B cell (primary cell): ENCODE measurements at regions of chr5 and their contacts with region 1.

Region 1: DNA sequence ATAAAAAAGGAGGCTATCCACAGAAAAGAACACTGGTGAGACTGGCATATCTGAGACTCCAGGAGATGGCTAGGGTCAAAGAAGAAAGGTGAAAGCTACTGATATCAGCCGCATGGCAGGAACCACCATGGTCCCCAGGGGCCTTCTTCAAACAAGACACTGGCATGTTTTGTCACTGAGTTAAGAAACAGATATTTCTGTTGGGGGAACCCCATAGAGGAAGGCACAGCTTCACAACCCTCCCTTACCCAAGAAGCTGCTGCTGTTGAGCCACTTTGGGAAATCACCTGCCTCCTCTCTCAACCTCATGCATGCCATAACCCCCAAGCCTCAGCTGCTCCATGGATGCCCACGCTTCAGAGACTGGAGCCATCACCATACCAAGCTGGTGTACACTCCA is 13.3 kb upstream of the BTNL3 start:
- DNase-seq: peak; percentile 80
- ATAC-seq: peak; percentile 99
- H3K4me3 ChIP-seq: no peak overlapping the region
- H3K4me3 Mint-ChIP-seq: peak overlapping the region; percentile 18
- H3K27ac ChIP-seq: peak overlapping the region; percentile 71 to 83
- H3K27ac Mint-ChIP-seq: peak overlapping the region; percentile 66
- H3K4me1 ChIP-seq: peaks cover 12 to 20% of the 10 kb centered on the region in 2 donors
- H3K4me1 Mint-ChIP-seq: peaks cover 36% of the 10 kb centered on the region
- H3K27me3 ChIP-seq: no peaks in the 10 kb centered on the region
- H3K27me3 Mint-ChIP-seq: no peaks in the 10 kb centered on the region
- CTCF ChIP-seq: no peak

Region 2: GRCh38 chr5:181052672-181053487 is 77.5 kb after region 1 on chr5:
- CTCF ChIA-PET with region 1: interaction called, 4 read pairs
- POLR2A ChIA-PET with region 1: interaction called, 7 read pairs
- intact Hi-C with region 1: loop called (anchors 1 kb)
- DNase-seq: peak; percentile 39
- ATAC-seq: peak; percentile 25
- H3K4me3 ChIP-seq: peak overlapping the region in 4 of 5 experiments; percentile 26 to 63 (median 50)
- H3K4me3 Mint-ChIP-seq: peak overlapping the region; percentile 91
- H3K27ac ChIP-seq: peak overlapping the region in 1 of 2 donors; percentile 2
- H3K27ac Mint-ChIP-seq: peak overlapping the region; percentile 89
- H3K4me1 ChIP-seq: peaks cover 28 to 47% of the 10 kb centered on the region in 2 donors
- H3K4me1 Mint-ChIP-seq: peaks cover 53% of the 10 kb centered on the region
- H3K27me3 ChIP-seq: peaks cover 0 to 75% (median 36%) of the 10 kb centered on the region in 4 experiments
- H3K27me3 Mint-ChIP-seq: peaks cover 53% of the 10 kb centered on the region
- CTCF ChIP-seq: no peak